ENCODE measurements at regions of chr6 and their contacts with region 1.

Region 1: GRCh38 chr6:36027501-36028087 is at the start of gene MAPK14:
- DNase-seq: peak; percentile 100
- ATAC-seq: peak; percentile 98
- total RNA-seq, gene MAPK14: 67.6 TPM

Region 2: DNA sequence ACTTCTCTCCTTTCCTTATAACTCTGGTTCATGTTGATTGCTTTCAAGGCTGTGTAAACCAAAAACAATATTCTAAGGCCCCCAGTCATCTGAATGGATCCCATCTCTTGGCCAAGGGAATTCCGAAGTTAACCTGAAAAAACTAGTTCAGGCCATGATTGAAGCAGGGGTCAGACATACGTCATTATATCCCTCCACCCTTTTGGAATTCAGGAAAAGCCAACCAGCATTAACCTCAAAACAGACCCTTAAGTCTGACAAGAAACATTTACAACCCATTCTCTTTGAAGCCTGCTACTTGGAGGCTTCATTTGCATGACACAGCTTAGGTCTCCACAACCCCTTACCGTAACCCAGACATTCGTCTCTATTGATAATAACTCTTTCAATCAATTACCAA is 42.9 kb before region 1 on chr6:
- intact Hi-C with region 1: no loop called
- DNase-seq: no peak
- ATAC-seq: no peak

Region 3: GRCh38 chr6:36094753-36095496 is 67.3 kb after region 1 on chr6:
- intact Hi-C with region 1: loop called (anchors 5 kb)
- DNase-seq: peak; percentile 90
- ATAC-seq: peak; percentile 96

Region 4: GRCh38 chr6:36682328-36683144 is 654.9 kb after region 1 on chr6:
- intact Hi-C with region 1: loop called (anchors 10 kb)
- DNase-seq: peak; percentile 60
- ATAC-seq: no peak

Measured in sciatic nerve (tissue), 2 donors.